ENCODE measurements at regions of chr21 and their contacts with region 1.

Region 1: GRCh38 chr21:25457411-25457810 is 149.9 kb downstream of the MRPL39 start:
- DNase-seq: no peak
- H3K4me3 Mint-ChIP-seq: peak overlapping the region; percentile 48
- H3K27ac Mint-ChIP-seq: peak overlapping the region; percentile 84
- H3K4me1 Mint-ChIP-seq: peaks cover 74% of the 10 kb centered on the region
- H3K27me3 Mint-ChIP-seq: no peaks in the 10 kb centered on the region

Region 2: DNA sequence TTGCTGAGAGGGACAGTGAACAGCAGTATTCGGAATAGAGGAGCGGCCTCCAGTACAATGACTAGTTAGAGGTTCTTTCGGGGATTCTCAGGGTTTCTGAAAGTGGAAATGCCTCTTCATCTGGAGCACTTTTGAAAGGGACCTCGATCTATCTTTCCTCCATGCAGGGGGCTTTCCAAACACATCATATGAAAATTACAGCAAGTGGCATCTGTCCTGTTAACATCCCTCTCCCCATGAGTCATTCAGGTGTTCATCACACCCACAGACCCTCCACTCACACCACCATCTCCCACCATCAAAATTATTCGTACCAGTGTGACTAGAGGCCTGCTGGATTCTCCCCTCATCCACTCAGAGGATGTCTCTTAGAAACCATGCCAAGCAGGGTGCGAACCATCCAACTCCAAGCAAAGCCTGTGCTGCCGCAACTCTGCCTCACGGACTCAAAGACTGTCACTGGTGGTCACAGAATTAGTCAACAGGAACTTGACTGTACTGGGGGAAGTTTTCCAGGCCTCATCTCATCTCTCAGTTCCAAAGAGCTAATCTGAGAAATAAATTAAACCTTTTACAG is 61.2 kb before region 1 on chr21:
- CTCF ChIA-PET with region 1: no interaction called
- intact Hi-C with region 1: loop called (anchors 1 kb)
- DNase-seq: peak; percentile 89
- H3K4me3 Mint-ChIP-seq: peak overlapping the region; percentile 41
- H3K27ac Mint-ChIP-seq: peak overlapping the region; percentile 81
- H3K4me1 Mint-ChIP-seq: peaks cover 18% of the 10 kb centered on the region
- H3K27me3 Mint-ChIP-seq: peaks cover 2% of the 10 kb centered on the region

Region 3: DNA sequence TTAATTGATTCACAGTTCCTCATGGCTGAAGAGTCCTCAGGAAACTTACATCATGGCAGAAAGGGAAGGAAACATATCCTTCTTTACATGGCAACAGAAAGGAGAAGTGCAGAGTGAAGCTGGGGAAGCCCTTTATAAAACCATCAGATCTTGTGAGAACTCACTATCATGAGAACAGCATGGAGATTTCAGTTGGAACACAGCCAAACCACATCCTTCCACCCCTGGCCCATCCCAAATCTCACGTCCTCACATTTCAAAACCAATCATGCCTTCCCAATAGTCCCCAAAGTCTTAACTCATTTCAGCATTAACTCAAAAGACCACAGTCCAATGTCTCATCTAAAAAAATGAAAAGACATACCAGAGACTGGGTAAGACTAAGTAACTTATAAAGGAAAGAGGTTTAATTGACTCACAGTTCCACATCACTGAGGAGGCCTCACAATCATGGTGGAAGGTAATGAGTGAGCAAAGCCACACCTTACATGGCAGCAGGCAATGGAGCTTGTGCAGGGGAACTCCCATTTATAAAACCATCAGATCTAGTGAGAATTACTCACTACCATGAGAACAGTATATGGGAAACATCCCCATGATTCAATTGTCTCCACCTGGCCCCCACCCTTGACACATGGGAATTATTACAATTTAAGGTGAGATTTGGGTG is 44.7 kb after region 1 on chr21:
- CTCF ChIA-PET with region 1: no interaction called
- intact Hi-C with region 1: loop called (anchors 1 kb)
- DNase-seq: peak; percentile 87
- H3K4me3 Mint-ChIP-seq: peak overlapping the region; percentile 53
- H3K27ac Mint-ChIP-seq: peak overlapping the region; percentile 92
- H3K4me1 Mint-ChIP-seq: peaks cover 78% of the 10 kb centered on the region
- H3K27me3 Mint-ChIP-seq: no peaks in the 10 kb centered on the region

Region 4: GRCh38 chr21:25556091-25556490 is 98.7 kb after region 1 on chr21:
- CTCF ChIA-PET with region 1: no interaction called
- intact Hi-C with region 1: loop called (anchors 1 kb)
- DNase-seq: no peak
- H3K4me3 Mint-ChIP-seq: no peak overlapping the region
- H3K27ac Mint-ChIP-seq: peak overlapping the region; percentile 70
- H3K4me1 Mint-ChIP-seq: peaks cover 63% of the 10 kb centered on the region
- H3K27me3 Mint-ChIP-seq: no peaks in the 10 kb centered on the region

Region 5: DNA sequence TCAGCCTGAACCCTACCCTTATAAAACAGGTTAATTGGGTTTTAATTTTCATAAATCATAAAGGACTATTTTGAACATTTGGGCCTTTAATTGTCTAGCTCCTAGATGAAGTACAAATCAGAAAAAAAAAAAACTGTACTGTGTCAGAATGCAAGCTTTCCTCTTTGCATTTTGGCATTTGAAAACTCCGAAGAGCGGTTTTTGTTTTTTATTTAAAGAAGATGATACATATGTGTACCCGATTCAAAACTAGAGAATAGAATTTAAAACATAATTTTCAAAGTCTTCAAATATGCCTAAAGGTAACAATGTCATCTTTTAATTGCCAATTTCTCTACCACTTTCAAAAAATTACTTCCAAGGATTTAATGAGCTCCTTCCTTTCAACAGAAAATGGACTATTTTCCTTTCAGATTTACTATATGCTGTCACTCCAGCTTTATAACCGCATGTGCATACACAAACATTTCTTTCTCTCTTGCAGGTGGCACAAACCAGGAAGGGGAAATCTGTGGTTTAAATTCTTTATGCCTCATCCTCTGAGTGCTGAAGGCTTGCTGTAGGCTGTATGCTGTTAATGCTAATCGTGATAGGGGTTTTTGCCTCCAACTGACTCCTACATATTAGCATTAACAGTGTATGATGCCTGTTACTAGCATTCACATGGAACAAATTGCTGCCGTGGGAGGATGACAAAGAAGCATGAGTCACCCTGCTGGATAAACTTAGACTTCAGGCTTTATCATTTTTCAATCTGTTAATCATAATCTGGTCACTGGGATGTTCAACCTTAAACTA is 116.2 kb after region 1 on chr21:
- CTCF ChIA-PET with region 1: interaction called, 5 read pairs
- intact Hi-C with region 1: loop called (anchors 1 kb)
- DNase-seq: peak; percentile 82
- H3K4me3 Mint-ChIP-seq: peak overlapping the region; percentile 72
- H3K27ac Mint-ChIP-seq: peak overlapping the region; percentile 95
- H3K4me1 Mint-ChIP-seq: peaks cover 73% of the 10 kb centered on the region
- H3K27me3 Mint-ChIP-seq: no peaks in the 10 kb centered on the region

Measured in activated naive CD4-positive, alpha-beta T cell treated with anti-CD3 and anti-CD28 coated beads for 36 hours (primary cell).